Posterior vena cava (tissue), 2 donors: ENCODE measurements at regions of chr6 and their contacts with region 1.

Region 1: GRCh38 chr6:76420094-76420493 is 347.6 kb upstream of the IMPG1 start:
- DNase-seq: no peak

Region 2: DNA sequence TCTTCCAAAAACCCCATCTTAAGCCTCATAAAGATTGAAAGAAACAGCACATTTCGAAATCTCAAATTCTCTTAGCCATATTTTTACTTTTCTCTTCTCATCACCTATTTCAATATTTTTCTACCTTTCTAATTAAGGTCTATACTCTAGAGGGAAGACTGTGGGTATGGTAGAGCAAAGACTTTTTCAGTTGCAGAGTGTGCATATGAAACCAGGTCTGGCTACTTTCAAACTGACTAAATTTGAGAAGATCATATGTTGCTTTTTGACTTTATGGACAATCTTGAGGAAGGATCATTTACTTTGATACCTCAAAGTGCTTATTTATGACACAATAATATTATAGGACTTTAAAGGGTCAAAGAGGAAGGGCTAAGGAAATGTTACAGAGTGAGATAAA is 947.2 kb before region 1 on chr6:
- intact Hi-C with region 1: no loop called
- DNase-seq: no peak

Region 3: GRCh38 chr6:76166874-76167273 is 253.2 kb before region 1 on chr6:
- intact Hi-C with region 1: loop called in 1 of 2 experiments (anchors 10 kb)
- DNase-seq: no peak